ENCODE measurements at regions of chr7 and their contacts with region 1.

Region 1: DNA sequence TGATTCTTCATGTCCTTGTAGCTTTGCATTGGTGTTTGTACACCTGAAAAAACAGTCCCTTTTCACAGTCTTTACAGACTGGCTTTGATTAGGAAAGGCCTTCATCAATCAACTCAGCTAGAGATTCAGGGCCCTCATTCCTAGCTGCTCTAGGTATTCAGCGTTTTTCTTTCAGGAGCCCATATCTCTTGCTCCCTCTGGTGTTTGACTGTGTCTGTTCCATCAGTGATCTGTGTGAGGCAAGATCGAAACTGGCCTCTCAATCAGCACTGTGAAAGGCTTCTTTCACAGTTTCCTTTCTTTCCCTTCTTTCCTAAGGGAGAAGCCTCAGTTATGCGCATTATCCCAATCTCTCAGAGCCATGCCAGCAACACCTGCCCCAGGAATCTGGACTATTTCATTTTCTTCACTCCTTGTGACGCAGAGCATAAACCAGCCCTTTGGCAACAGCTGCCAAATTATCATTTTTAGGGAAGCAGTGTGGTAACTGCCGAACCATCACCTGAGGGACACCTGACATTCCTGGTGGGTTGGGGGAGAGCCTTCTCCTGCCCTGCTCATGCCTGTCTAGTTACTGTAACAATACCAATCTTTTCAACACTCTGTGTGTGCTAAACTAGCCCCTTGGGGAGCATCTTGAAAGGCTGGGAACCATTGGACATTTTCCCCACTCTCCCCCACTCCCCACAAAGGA is 75.7 kb upstream of the CCDC71L start:
- DNase-seq: no peak
- H3K4me3 ChIP-seq: no peak overlapping the region
- H3K27ac ChIP-seq: no peak overlapping the region
- H3K4me1 ChIP-seq: peaks cover 7 to 16% (median 11%) of the 10 kb centered on the region in 4 donors
- H3K27me3 ChIP-seq: no peaks in the 10 kb centered on the region
- CTCF ChIP-seq: peak; percentile 55 to 73 (median 61)
- EP300 ChIP-seq: no peak
- POLR2A ChIP-seq: no peak

Region 2: DNA sequence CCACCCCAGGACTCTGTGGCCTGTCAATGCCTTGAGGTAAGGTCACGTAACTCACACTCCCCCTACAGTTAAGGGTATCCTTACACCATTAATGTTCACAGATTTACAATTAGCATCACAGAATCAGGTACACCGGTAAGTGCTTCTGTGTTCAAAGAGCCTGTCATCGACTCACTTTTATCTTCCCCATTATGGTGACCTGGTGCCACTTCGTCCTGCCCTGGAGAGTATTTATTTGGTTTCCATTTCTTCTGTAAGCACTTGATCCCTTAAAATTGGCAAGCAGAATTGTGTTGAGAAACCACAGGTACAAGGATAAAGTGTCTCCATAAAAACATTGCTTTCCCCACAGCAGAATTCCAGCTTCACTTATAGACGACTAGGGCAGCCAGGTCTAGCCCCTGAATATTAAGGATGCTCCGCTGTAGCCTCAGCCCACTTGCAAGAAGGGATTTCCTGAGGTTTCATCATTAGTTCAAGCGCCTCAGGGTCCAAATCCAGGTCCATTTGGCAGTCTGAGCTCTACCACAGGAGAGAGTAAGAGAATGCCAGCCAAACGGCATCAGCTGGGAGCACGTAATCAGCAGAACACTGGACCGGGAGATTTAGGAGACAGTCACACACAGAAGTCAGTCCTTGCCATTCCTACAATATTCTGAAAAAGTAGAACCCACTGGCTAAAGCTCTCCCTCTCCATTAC is 870.4 kb before region 1 on chr7:
- intact Hi-C with region 1: no loop called
- DNase-seq: no peak
- H3K4me3 ChIP-seq: no peak overlapping the region
- H3K27ac ChIP-seq: no peak overlapping the region
- H3K4me1 ChIP-seq: peaks cover 0 to 11% (median 0%) of the 10 kb centered on the region in 4 donors
- H3K27me3 ChIP-seq: no peaks in the 10 kb centered on the region
- CTCF ChIP-seq: no peak
- EP300 ChIP-seq: no peak
- POLR2A ChIP-seq: no peak

Region 3: DNA sequence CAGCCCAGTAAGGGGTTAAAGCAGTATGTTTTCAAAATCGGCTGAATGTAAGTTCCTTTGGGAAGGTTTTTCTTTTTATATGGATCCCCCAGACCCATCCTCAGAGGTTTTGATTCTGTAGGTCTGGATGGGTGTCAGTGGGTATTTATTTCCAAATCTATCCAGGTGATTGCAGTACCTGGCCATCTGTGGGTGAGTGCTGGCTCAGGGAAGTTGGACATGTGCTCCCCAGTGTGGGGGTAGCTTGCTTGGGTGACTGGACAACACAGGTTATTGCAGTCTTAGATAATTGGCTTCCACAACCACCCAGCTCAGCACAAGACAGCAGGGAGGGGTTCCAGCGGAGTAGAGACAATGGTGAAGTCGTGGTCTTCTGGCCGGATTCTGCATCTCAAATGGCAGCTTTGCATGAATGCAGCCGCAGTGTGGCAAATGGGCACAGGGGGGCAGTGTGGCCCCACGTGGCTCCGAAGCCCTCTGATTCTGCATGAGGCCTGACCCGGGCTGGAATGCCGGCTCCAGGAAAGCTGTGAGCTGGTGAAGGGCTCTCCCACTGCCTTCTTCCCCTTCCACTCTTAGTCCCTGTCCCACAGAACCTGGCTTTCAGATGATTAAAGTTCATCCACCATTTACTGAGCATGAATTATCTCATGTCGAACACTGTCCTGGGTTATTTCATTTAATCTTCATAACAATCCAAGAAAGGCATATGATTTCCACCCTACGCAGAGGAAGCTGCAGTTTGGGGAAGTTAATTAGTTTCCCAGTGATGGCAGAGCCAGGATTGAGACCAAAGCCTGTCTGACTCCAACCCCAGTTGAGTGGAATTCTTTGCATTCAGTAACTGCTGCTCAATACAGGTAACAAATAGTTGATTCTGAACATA is 560.0 kb before region 1 on chr7:
- intact Hi-C with region 1: loop called (anchors 5 kb)
- DNase-seq: peak; percentile 96
- H3K4me3 ChIP-seq: no peak overlapping the region
- H3K27ac ChIP-seq: peak overlapping the region in 1 of 4 donors; percentile 15
- H3K4me1 ChIP-seq: peaks cover 13 to 36% (median 16%) of the 10 kb centered on the region in 4 donors
- H3K27me3 ChIP-seq: no peaks in the 10 kb centered on the region
- CTCF ChIP-seq: peak; percentile 96 to 98 (median 97)
- EP300 ChIP-seq: no peak
- POLR2A ChIP-seq: no peak

Region 4: GRCh38 chr7:106542550-106543220 is 194.0 kb before region 1 on chr7:
- intact Hi-C with region 1: loop called (anchors 5 kb)
- DNase-seq: peak; percentile 89
- H3K4me3 ChIP-seq: no peak overlapping the region
- H3K27ac ChIP-seq: peak overlapping the region; percentile 68 to 80 (median 72)
- H3K4me1 ChIP-seq: peaks cover 6 to 24% (median 18%) of the 10 kb centered on the region in 4 donors
- H3K27me3 ChIP-seq: no peaks in the 10 kb centered on the region
- CTCF ChIP-seq: peak; percentile 58 to 63 (median 60)
- EP300 ChIP-seq: no peak
- POLR2A ChIP-seq: no peak

Region 5: DNA sequence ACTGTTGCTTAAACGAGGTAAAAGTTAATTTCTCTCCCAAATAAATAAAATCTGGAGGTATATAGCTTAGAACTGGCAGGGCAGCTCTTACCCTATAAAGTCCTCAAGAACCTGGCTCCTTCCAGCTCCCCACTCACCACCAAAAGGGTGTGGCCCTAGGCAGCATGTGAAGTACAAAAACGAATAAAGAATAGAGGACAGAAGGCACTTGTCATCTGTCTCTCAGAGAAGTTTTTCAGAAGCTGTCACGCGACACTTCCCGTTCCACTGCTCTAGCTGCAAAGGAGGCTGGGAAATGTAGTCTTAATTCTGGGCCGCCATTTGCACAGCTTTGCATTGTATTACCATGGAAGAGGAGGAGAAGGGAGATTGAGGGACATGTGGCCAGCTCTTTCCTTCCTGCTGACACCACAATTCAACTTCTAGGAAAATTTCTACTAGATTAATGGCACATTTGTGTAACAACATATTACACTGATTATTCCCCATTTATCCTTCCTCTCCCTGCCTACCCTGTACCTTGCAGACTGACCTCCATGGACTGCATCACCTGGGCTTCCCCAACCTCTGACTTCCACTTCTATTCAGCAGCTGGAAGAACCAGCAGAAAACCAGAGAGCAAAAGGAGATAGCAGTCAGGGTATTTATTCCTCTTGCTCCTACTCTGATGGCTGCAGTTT is 137.9 kb before region 1 on chr7:
- intact Hi-C with region 1: no loop called
- DNase-seq: no peak
- H3K4me3 ChIP-seq: peak overlapping the region; percentile 27 to 42 (median 34)
- H3K27ac ChIP-seq: no peak overlapping the region
- H3K4me1 ChIP-seq: no peaks in the 10 kb centered on the region
- H3K27me3 ChIP-seq: no peaks in the 10 kb centered on the region
- CTCF ChIP-seq: no peak
- EP300 ChIP-seq: no peak
- POLR2A ChIP-seq: no peak

Region 6: DNA sequence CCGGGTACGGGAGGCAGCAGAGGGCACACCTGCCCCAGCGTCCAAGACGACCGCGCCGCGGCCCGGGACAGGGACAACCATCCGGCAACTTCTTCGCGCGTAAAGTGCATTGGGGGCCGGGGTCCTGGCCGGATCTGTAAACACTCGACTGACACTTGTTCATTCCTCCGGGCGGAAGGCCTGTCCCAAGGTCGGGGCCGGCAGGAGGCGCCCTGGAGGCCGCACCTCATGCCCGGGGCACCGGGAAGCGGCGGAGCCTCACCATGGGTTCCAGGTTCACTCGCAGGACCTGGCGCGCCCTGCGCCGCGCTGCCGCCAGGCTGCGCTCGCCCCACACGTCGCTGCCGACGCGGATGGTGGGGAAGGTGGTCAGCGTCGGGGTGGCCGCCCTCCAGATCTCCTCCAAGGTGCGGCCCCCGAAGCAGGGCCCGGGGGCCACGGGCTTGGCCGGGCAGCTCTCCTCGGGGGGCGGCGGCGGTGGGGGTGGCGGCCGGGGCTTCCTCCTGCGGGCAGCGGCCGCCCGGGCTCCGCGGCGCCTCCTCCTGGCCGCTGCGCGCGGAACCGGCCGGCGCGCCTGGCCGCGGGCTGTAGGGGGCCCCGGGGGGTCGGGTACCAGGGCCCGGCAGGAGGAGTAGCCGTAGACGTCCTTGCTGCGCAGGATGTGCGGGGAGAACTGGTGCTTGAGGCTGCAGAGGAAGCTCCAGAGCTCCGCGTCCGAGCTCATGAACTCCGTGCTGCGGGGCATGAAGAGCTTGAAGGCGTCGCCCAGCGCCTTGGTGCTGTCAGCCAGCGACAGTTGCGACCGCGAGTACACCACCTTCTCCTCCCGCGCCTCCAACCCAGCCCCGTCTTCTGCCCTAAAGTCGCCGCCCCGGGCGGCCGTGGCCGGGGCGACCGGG is 76.4 kb before region 1 on chr7:
- intact Hi-C with region 1: loop called (anchors 2 kb)
- DNase-seq: no peak
- H3K4me3 ChIP-seq: peak overlapping the region; percentile 65 to 94 (median 88)
- H3K27ac ChIP-seq: peak overlapping the region; percentile 96 to 99 (median 96)
- H3K4me1 ChIP-seq: peaks cover 14 to 32% (median 27%) of the 10 kb centered on the region in 4 donors
- H3K27me3 ChIP-seq: no peaks in the 10 kb centered on the region
- CTCF ChIP-seq: peak; percentile 46 to 90 (median 68)
- EP300 ChIP-seq: no peak
- POLR2A ChIP-seq: no peak

Measured in esophagus muscularis mucosa (tissue), 4 donors.